IMR-90 (cell line): ENCODE measurements at regions of chr1 and their contacts with region 1.

Region 1: GRCh38 chr1:151036363-151036762 is at the start of gene BNIPL:
- DNase-seq: no peak
- ATAC-seq: no peak
- H3K4me3 ChIP-seq: no peak within 1 kb of the TSS
- H3K27ac ChIP-seq: no peak within 1 kb of the TSS
- H3K4me1 ChIP-seq: no peaks in the 10 kb centered on the region
- H3K27me3 ChIP-seq: no peaks in the 10 kb centered on the region
- CTCF ChIP-seq: no peak
- POLR2A ChIP-seq: no peak
- RAD21 ChIP-seq: no peak
- total RNA-seq, gene BNIPL: under 0.01 TPM in 1 of 2 replicates, not detected in the other

Region 2: GRCh38 chr1:150979092-150980056 is 57.0 kb before region 1 on chr1:
- CTCF ChIA-PET with region 1: no interaction called
- POLR2A ChIA-PET with region 1: no interaction called
- dilution Hi-C with region 1: no loop called
- in situ Hi-C with region 1: loop called (anchors 10 kb)
- intact Hi-C with region 1: no loop called
- DNase-seq: peak; percentile 85
- ATAC-seq: peak; percentile 32
- H3K4me3 ChIP-seq: no peak overlapping the region
- H3K27ac ChIP-seq: no peak overlapping the region
- H3K4me1 ChIP-seq: peaks cover 22% of the 10 kb centered on the region
- H3K27me3 ChIP-seq: no peaks in the 10 kb centered on the region; the same call in 1 of the 2 replicates
- CTCF ChIP-seq: peak; percentile 100; the same call in 1 of the 2 replicates
- POLR2A ChIP-seq: no peak
- RAD21 ChIP-seq: peak; percentile 73